PC-3 (cell line): ENCODE measurements at regions of chr6 and their contacts with region 1.

Region 1: DNA sequence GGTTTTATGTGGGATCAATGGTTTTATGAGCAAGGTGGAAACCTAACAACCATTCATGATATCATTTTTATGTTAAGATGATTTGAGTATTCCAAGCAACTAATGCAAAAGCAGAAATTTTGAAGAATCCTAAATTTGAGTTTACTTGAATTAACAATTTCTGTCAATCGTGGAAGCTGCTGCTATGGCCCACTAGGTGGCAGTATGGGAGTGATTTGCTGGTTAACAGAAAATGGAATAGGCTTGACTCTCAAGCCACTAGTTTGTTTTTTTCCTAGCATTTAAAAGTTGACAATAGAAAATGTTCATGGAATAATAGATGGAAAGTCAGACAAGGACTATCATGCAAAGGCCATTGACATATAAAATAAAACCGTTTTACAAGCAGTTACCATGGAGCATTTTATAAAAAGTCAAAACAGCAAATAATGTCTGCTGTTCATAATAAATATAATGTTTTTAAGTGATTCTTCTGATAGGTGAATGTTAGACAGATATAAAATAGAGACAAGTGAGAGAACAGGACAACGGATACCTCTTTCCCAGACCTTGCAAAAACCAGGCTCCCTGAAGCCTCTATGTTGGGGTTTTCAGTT is 43.0 kb upstream of the TMEM200A start:
- DNase-seq: peak; percentile 68
- ATAC-seq: peak; percentile 37; the same call in 1 of the 2 replicates
- H3K4me3 ChIP-seq: no peak overlapping the region
- H3K27ac ChIP-seq: no peak overlapping the region
- H3K4me1 ChIP-seq: peaks cover 11% of the 10 kb centered on the region; the same call in 1 of the 2 replicates
- H3K27me3 ChIP-seq: no peaks in the 10 kb centered on the region
- CTCF ChIP-seq: peak; percentile 85

Region 2: GRCh38 chr6:130070792-130071191 is 252.0 kb before region 1 on chr6:
- CTCF ChIA-PET with region 1: interaction called, 13 read pairs
- POLR2A ChIA-PET with region 1: no interaction called
- intact Hi-C with region 1: no loop called
- DNase-seq: no peak
- ATAC-seq: no peak
- H3K4me3 ChIP-seq: no peak overlapping the region
- H3K27ac ChIP-seq: no peak overlapping the region
- H3K4me1 ChIP-seq: no peaks in the 10 kb centered on the region
- H3K27me3 ChIP-seq: no peaks in the 10 kb centered on the region
- CTCF ChIP-seq: no peak

Region 3: GRCh38 chr6:130293800-130294199 is 29.0 kb before region 1 on chr6:
- CTCF ChIA-PET with region 1: no interaction called
- POLR2A ChIA-PET with region 1: no interaction called
- intact Hi-C with region 1: loop called (anchors 2 kb)
- DNase-seq: peak; percentile 70
- ATAC-seq: peak; percentile 93
- H3K4me3 ChIP-seq: no peak overlapping the region
- H3K27ac ChIP-seq: no peak overlapping the region
- H3K4me1 ChIP-seq: no peaks in the 10 kb centered on the region
- H3K27me3 ChIP-seq: no peaks in the 10 kb centered on the region
- CTCF ChIP-seq: peak; percentile 73

Region 4: DNA sequence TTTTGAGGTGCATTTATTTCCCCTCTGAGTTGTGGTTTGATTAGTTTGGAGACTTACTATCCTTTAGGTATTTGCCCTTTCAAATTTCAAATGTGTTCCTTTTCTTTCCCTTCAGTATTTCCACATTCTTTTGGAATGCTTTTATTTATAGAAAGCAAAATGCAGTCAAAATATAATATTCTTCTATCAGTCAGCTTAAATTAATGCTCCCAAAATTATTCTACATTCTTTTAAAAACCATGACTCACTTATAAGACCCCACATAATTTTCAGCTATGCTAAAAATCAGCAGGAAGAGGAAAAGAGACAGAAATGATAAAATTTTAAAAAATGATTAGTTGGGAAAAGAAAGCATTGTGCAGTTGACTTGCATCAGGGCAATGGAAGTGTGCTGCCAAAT is 324.5 kb after region 1 on chr6:
- CTCF ChIA-PET with region 1: no interaction called
- POLR2A ChIA-PET with region 1: no interaction called
- intact Hi-C with region 1: no loop called
- DNase-seq: no peak
- ATAC-seq: no peak
- H3K4me3 ChIP-seq: no peak overlapping the region
- H3K27ac ChIP-seq: no peak overlapping the region
- H3K4me1 ChIP-seq: no peaks in the 10 kb centered on the region
- H3K27me3 ChIP-seq: no peaks in the 10 kb centered on the region
- CTCF ChIP-seq: no peak

Region 5: DNA sequence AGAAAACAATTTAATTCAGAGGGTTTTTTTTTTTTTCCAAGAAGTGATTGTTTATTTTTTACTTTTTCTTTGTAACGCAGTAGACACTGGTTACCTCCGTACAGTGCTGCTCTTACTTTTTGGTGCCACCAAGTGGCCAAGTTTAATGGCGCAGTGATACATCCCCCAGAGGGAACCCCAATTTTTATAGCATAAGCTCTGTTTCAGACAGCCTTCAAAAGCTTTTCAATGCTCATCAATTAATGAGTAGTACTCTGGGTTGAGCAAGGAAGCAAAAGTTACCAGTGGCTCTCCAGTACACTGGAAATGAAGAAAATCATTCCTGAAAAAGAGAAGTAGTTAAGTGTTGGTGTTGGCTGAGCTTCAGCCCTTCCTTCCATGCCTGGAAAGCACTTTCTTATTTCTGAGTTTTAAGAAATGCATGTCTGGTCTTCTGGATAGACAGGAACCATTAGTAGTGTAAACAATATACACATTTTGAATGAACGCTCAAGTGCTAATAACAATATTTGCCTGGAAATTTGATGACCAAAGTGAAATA is 375.3 kb after region 1 on chr6:
- CTCF ChIA-PET with region 1: interaction called, 4 read pairs
- POLR2A ChIA-PET with region 1: no interaction called
- intact Hi-C with region 1: loop called (anchors 1 kb)
- DNase-seq: peak; percentile 62
- ATAC-seq: peak; percentile 81
- H3K4me3 ChIP-seq: no peak overlapping the region
- H3K27ac ChIP-seq: no peak overlapping the region
- H3K4me1 ChIP-seq: peaks cover 4% of the 10 kb centered on the region; the same call in 1 of the 2 replicates
- H3K27me3 ChIP-seq: no peaks in the 10 kb centered on the region
- CTCF ChIP-seq: peak; percentile 89

Region 6: GRCh38 chr6:130760006-130760405 is 437.2 kb after region 1 on chr6:
- CTCF ChIA-PET with region 1: no interaction called
- POLR2A ChIA-PET with region 1: no interaction called
- intact Hi-C with region 1: loop called (anchors 1 kb)
- DNase-seq: peak; percentile 66
- ATAC-seq: peak; percentile 85
- H3K4me3 ChIP-seq: no peak overlapping the region
- H3K27ac ChIP-seq: no peak overlapping the region
- H3K4me1 ChIP-seq: no peaks in the 10 kb centered on the region
- H3K27me3 ChIP-seq: no peaks in the 10 kb centered on the region
- CTCF ChIP-seq: peak; percentile 80